Activated CD8-positive, alpha-beta T cell treated with anti-CD3 and anti-CD28 coated beads for 36 hours (primary cell): ENCODE measurements at regions of chr14 and their contacts with region 1.

Region 1: GRCh38 chr14:71555654-71556559 is 376.3 kb upstream of the RGS6 start:
- DNase-seq: peak; percentile 87
- ATAC-seq: peak; percentile 88
- H3K4me3 Mint-ChIP-seq: peak overlapping the region; percentile 66
- H3K27ac Mint-ChIP-seq: peak overlapping the region; percentile 99
- H3K4me1 Mint-ChIP-seq: peaks cover 76% of the 10 kb centered on the region
- H3K27me3 Mint-ChIP-seq: no peaks in the 10 kb centered on the region
- CTCF ChIP-seq: no peak

Region 2: DNA sequence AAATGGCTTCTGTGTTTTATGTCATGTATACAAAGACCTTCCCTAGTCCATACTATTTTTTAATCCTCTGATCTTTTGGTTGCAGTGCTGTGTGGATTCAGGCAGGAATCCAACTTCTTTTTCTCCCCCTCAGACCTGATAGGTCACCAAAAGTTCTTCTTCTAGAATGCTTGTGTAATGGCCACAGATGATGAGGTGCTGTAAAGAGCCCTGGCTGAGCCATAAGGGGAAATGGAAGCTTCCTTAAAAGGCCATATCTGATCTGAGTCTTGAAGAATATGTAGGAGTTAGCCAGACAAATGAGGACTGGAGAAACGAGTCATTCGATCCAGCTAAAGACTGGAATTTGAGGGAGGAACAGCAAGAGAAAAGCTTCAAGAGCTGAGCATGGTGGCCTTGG is 294.7 kb before region 1 on chr14:
- CTCF ChIA-PET with region 1: no interaction called
- POLR2A ChIA-PET with region 1: no interaction called
- intact Hi-C with region 1: no loop called
- DNase-seq: no peak
- ATAC-seq: no peak
- H3K4me3 Mint-ChIP-seq: no peak overlapping the region
- H3K27ac Mint-ChIP-seq: no peak overlapping the region
- H3K4me1 Mint-ChIP-seq: peaks cover 9% of the 10 kb centered on the region
- H3K27me3 Mint-ChIP-seq: no peaks in the 10 kb centered on the region
- CTCF ChIP-seq: no peak

Region 3: DNA sequence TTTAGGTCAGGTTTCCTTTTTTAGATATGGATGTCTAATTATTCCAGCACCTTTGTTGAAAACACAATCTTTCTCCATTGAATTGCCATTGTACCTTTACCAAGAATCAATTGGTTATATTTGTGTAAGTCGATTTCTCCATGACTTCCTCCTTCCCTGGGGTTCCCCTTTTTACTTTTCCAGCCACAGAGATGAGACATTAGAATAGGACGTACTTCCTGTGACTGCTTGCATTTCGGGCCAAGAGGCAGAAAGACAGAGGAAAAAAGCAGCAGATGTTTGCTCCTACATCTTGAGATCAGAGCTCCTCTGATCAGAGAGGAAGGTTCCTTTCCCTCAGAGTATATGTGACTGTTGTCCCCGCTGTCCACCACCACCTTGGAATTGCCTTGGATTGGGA is 77.4 kb before region 1 on chr14:
- CTCF ChIA-PET with region 1: interaction called, 4 read pairs
- POLR2A ChIA-PET with region 1: interaction called, 3 read pairs
- intact Hi-C with region 1: loop called (anchors 5 kb)
- DNase-seq: peak; percentile 42
- ATAC-seq: peak; percentile 54
- H3K4me3 Mint-ChIP-seq: no peak overlapping the region
- H3K27ac Mint-ChIP-seq: peak overlapping the region; percentile 63
- H3K4me1 Mint-ChIP-seq: peaks cover 53% of the 10 kb centered on the region
- H3K27me3 Mint-ChIP-seq: no peaks in the 10 kb centered on the region
- CTCF ChIP-seq: no peak

Region 4: DNA sequence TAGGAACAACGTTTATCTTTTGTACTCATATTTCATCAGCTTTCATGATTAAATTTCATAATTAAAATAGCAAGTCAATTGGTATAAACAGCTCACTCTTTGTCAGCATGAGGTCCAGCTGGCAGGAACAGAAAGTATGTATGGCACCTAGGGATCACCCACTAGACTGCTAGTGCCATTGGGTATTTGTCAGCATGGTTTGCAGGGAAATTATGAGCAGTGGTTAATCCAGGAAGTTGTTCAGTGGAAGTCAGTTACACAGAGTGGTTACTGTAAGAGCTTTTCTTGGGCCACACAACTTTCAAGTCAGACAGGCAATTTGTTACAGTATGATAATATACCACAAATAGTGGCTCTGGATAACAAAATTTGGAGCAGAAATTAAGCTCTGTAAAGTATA is 36.0 kb after region 1 on chr14:
- CTCF ChIA-PET with region 1: interaction called, 4 read pairs
- POLR2A ChIA-PET with region 1: no interaction called
- intact Hi-C with region 1: loop called (anchors 5 kb)
- DNase-seq: peak; percentile 47
- ATAC-seq: peak; percentile 80
- H3K4me3 Mint-ChIP-seq: no peak overlapping the region
- H3K27ac Mint-ChIP-seq: peak overlapping the region; percentile 77
- H3K4me1 Mint-ChIP-seq: peaks cover 58% of the 10 kb centered on the region
- H3K27me3 Mint-ChIP-seq: no peaks in the 10 kb centered on the region
- CTCF ChIP-seq: no peak

Region 5: GRCh38 chr14:71606064-71606463 is 50.2 kb after region 1 on chr14:
- CTCF ChIA-PET with region 1: no interaction called
- POLR2A ChIA-PET with region 1: no interaction called
- intact Hi-C with region 1: no loop called
- DNase-seq: no peak
- ATAC-seq: no peak
- H3K4me3 Mint-ChIP-seq: no peak overlapping the region
- H3K27ac Mint-ChIP-seq: no peak overlapping the region
- H3K4me1 Mint-ChIP-seq: peaks cover 36% of the 10 kb centered on the region
- H3K27me3 Mint-ChIP-seq: no peaks in the 10 kb centered on the region
- CTCF ChIP-seq: no peak